ENCODE measurements at regions of chr12 and their contacts with region 1.

Region 1: GRCh38 chr12:128829861-128830504 is 6.2 kb upstream of the SLC15A4 start:
- DNase-seq: peak; percentile 97
- ATAC-seq: peak; percentile 86
- H3K4me3 ChIP-seq: peak overlapping the region; percentile 35; the same call in 1 of the 2 replicates
- H3K27ac ChIP-seq: peak overlapping the region; percentile 98
- H3K4me1 ChIP-seq: peaks cover 28% of the 10 kb centered on the region
- H3K27me3 ChIP-seq: no peaks in the 10 kb centered on the region
- CTCF ChIP-seq: no peak
- EP300 ChIP-seq: peak; percentile 88 to 96
- POLR2A ChIP-seq: no peak
- RAD21 ChIP-seq: no peak

Region 2: DNA sequence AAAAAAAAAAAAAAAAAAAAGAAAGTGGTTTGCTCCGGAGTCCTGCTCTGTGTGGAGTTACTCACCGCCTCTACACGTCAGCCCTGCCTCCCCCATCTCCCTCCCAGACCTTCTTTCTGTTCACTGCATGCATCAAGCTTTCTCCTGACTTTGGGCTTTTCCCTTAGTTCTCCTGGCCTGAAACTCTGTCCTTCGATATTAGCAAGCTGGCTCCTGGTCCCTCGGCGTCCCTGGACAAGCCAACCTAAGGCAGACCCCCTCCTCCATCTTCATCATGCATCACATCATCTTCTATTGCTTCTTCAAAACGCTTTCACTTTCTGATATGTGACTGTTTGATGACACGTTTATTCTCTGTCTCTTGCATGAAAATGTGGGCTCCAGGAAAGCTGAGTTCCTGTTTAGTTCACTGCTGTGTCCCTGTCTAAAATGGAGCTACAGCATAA is 46.8 kb before region 1 on chr12:
- CTCF ChIA-PET with region 1: interaction called, 8 read pairs
- POLR2A ChIA-PET with region 1: interaction called, 5 read pairs
- RAD21 ChIA-PET with region 1: interaction called, 22 read pairs
- SMC1A ChIA-PET with region 1: interaction called, 13 read pairs
- in situ Hi-C with region 1: no loop called
- intact Hi-C with region 1: no loop called
- DNase-seq: no peak
- ATAC-seq: peak; percentile 83
- H3K4me3 ChIP-seq: no peak overlapping the region; the same call in 1 of the 2 replicates
- H3K27ac ChIP-seq: peak overlapping the region; percentile 47; the same call in 1 of the 2 replicates
- H3K4me1 ChIP-seq: no peaks in the 10 kb centered on the region; the same call in none of the 2 replicates
- H3K27me3 ChIP-seq: no peaks in the 10 kb centered on the region
- CTCF ChIP-seq: no peak
- EP300 ChIP-seq: no peak
- POLR2A ChIP-seq: no peak
- RAD21 ChIP-seq: no peak

Region 3: GRCh38 chr12:128803788-128804187 is 26.2 kb before region 1 on chr12:
- CTCF ChIA-PET with region 1: interaction called, 33 read pairs
- POLR2A ChIA-PET with region 1: interaction called, 45 read pairs
- RAD21 ChIA-PET with region 1: interaction called, 51 read pairs
- SMC1A ChIA-PET with region 1: interaction called, 55 read pairs
- in situ Hi-C with region 1: no loop called
- intact Hi-C with region 1: no loop called
- DNase-seq: no peak
- ATAC-seq: no peak
- H3K4me3 ChIP-seq: no peak overlapping the region
- H3K27ac ChIP-seq: no peak overlapping the region
- H3K4me1 ChIP-seq: peaks cover 28% of the 10 kb centered on the region
- H3K27me3 ChIP-seq: no peaks in the 10 kb centered on the region
- CTCF ChIP-seq: no peak
- EP300 ChIP-seq: no peak
- POLR2A ChIP-seq: no peak
- RAD21 ChIP-seq: no peak

Region 4: DNA sequence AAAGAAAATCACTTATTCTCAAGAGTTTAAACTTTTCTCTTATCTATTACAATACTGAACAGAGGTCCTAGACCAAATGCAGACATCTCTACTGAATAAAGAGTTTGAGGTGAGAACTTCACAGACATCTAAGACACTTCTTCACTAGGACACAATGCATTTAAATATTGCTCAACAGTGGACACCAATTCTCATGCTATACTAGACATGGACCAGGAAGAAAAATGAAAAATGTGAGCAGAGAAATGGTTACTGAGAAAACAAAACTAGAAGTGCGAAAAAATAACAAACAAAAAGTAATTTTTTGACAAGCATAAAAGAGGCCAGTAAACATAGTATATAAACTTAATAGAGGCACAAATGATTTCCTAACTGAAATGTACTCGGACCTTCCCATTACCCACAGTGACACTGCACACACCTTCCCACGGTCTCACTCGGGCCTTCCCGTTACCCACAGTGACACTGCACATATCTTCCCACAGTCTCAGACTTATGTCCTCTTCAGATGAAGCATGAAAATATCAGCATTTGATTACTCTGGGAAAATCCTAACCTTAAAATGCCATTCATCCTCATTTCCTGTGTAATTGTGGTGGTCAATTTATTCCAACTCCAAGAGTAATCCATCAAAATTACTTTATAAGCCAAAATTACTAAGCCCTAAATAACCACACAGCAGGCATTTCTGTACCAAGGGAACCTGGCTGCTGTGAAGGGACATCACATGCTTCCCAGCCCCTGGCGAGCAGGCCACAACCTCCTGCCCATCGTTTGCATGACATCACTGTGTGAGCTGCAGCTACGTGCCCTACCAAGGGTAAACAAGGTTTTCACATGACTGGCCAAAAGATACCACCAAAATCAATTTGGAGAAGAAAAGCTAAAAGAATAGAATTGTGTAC is 12.6 kb before region 1 on chr12:
- CTCF ChIA-PET with region 1: interaction called, 28 read pairs
- POLR2A ChIA-PET with region 1: interaction called, 46 read pairs
- RAD21 ChIA-PET with region 1: interaction called, 52 read pairs
- SMC1A ChIA-PET with region 1: interaction called, 62 read pairs
- in situ Hi-C with region 1: no loop called
- intact Hi-C with region 1: no loop called
- DNase-seq: peak; percentile 90
- ATAC-seq: peak; percentile 42
- H3K4me3 ChIP-seq: peak overlapping the region; percentile 98
- H3K27ac ChIP-seq: peak overlapping the region; percentile 94
- H3K4me1 ChIP-seq: peaks cover 70% of the 10 kb centered on the region
- H3K27me3 ChIP-seq: no peaks in the 10 kb centered on the region
- CTCF ChIP-seq: no peak
- EP300 ChIP-seq: peak in 1 of 2 experiments; percentile 10; a peak in 2 of 4 replicates
- POLR2A ChIP-seq: peak; percentile 54
- RAD21 ChIP-seq: no peak

Region 5: DNA sequence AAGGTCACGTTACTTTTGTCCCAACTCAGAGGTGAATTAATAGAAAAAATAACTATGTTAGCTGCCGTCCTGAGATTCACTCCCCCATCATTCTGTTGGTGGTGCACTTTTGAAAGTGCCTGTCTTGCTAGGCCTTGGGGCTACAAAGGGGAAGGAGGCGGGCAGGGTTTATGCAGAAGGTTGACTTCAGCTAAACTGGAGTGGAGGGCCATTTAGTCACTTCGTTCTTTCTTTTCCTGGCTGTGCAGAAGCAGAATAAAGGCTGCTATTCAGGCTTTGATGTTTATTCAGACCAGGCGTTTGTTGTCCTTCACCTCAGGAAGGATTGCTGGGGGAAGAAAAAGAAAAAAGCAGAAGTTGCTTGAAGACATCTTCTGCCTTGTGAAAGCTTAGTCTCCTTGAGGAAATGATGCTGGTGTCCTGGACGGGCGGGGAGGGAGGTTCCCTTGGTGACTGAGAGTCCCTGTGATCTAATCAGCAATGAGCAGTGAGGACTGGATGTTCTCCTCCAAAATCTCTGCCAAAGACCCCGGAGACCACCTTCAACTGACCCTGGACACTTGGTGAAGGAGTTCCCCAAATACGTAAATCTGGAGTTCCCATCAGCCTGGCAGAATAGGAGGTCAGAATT is 27.3 kb after region 1 on chr12:
- CTCF ChIA-PET with region 1: interaction called, 4 read pairs
- POLR2A ChIA-PET with region 1: interaction called, 15 read pairs
- RAD21 ChIA-PET with region 1: interaction called, 8 read pairs
- SMC1A ChIA-PET with region 1: interaction called, 10 read pairs
- in situ Hi-C with region 1: no loop called
- intact Hi-C with region 1: loop called (anchors 1 kb)
- DNase-seq: peak; percentile 31
- ATAC-seq: peak; percentile 17
- H3K4me3 ChIP-seq: no peak overlapping the region
- H3K27ac ChIP-seq: no peak overlapping the region
- H3K4me1 ChIP-seq: peaks cover 11% of the 10 kb centered on the region; the same call in 1 of the 2 replicates
- H3K27me3 ChIP-seq: no peaks in the 10 kb centered on the region
- CTCF ChIP-seq: no peak
- EP300 ChIP-seq: no peak
- POLR2A ChIP-seq: no peak
- RAD21 ChIP-seq: no peak

Measured in GM12878 (cell line).